T-cell (primary cell): ENCODE measurements at regions of chr9 and their contacts with region 1.

Region 1: DNA sequence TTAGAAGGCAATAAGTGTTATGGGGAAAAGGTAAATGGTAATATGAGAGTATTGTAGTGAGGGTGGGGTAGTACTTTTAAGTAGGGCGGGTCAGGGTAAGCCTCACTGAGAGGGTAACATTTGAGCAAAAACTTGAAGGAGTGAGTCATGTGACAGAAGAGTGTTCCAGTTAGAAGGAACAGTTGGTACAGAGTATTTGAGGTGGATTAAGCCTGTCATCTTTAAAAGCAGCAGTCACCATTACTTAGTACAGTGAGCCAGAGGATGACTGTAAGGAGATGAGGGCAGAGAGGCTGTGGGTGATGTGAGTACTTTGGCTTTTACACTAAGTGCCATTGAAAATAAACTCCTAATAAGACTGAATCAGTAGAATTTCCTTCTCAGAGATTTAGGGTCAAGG is 54.8 kb downstream of the UBAP1 start:
- DNase-seq: no peak
- ATAC-seq: no peak
- H3K4me3 ChIP-seq: no peak overlapping the region
- H3K4me3 Mint-ChIP-seq: no peak overlapping the region
- H3K27ac ChIP-seq: no peak overlapping the region
- H3K27ac Mint-ChIP-seq: peak overlapping the region in 1 of 2 donors; percentile 65
- H3K4me1 ChIP-seq: peaks cover 0 to under 1% of the 10 kb centered on the region in 2 experiments
- H3K4me1 Mint-ChIP-seq: peaks cover 13 to 26% (median 22%) of the 10 kb centered on the region in 3 donors
- H3K27me3 ChIP-seq: no peaks in the 10 kb centered on the region
- H3K27me3 Mint-ChIP-seq: no peaks in the 10 kb centered on the region

Region 2: DNA sequence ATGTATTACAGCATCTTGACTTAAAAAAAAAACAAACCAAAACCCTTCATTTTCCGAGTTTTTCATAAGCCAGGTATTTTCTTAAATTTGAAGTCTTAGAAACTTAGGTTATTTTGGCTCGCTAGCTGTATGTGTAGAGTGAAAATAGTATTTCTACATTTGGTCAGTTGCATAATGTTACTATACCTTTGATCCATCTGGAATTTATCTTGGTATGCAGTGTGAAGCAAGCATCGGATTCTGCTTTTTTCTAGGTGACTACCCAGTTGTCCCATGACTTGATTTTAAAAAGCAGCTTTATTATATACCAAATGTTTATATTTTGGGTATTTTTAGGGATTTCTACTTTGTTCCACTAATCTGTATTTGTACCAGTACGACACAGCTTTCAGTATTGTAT is 27.1 kb before region 1 on chr9:
- CTCF ChIA-PET with region 1: no interaction called
- POLR2A ChIA-PET with region 1: interaction called in 1 of 2 experiments, 13 read pairs
- DNase-seq: no peak
- ATAC-seq: no peak
- H3K4me3 ChIP-seq: no peak overlapping the region
- H3K4me3 Mint-ChIP-seq: no peak overlapping the region
- H3K27ac ChIP-seq: no peak overlapping the region
- H3K27ac Mint-ChIP-seq: no peak overlapping the region
- H3K4me1 ChIP-seq: peaks cover 1 to 8% of the 10 kb centered on the region in 2 experiments
- H3K4me1 Mint-ChIP-seq: peaks cover 55 to 64% (median 56%) of the 10 kb centered on the region in 3 donors
- H3K27me3 ChIP-seq: no peaks in the 10 kb centered on the region
- H3K27me3 Mint-ChIP-seq: no peaks in the 10 kb centered on the region

Region 3: GRCh38 chr9:34216325-34216724 is 17.3 kb before region 1 on chr9:
- CTCF ChIA-PET with region 1: interaction called in 1 of 2 experiments, 6 read pairs
- POLR2A ChIA-PET with region 1: interaction called in 1 of 2 experiments, 10 read pairs
- DNase-seq: no peak
- ATAC-seq: no peak
- H3K4me3 ChIP-seq: no peak overlapping the region
- H3K4me3 Mint-ChIP-seq: no peak overlapping the region
- H3K27ac ChIP-seq: no peak overlapping the region
- H3K27ac Mint-ChIP-seq: no peak overlapping the region
- H3K4me1 ChIP-seq: peaks cover 0 to 2% of the 10 kb centered on the region in 2 experiments
- H3K4me1 Mint-ChIP-seq: peaks cover 18 to 45% (median 35%) of the 10 kb centered on the region in 3 donors
- H3K27me3 ChIP-seq: no peaks in the 10 kb centered on the region
- H3K27me3 Mint-ChIP-seq: no peaks in the 10 kb centered on the region

Region 4: DNA sequence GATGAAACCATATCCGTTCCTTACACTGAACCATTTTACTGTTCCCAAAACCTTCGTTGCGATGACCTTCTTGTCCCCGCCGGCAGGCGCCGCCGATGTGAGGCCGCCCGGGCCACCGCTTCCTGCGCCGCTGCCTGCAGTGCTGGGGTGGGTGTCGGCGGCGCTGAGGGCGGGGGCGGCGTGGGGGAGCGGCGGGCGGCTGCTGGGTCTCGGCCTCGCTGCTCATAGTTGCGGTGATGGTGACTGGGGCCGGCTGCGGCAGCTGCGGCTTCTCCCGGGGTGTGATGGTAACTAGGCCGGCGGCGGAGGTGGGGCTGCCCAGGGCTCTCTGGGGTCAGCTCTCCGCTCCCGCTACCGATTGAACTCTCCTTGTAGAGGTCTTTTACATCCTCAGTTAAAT is 1738.4 kb after region 1 on chr9:
- CTCF ChIA-PET with region 1: interaction called in 1 of 2 experiments, 11 read pairs
- POLR2A ChIA-PET with region 1: no interaction called
- DNase-seq: peak in 26 of 35 experiments; percentile 2 to 47 (median 20)
- ATAC-seq: peak; percentile 77 to 81 (median 80)
- H3K4me3 ChIP-seq: no peak overlapping the region
- H3K4me3 Mint-ChIP-seq: peak overlapping the region; percentile 29 to 67 (median 49)
- H3K27ac ChIP-seq: no peak overlapping the region
- H3K27ac Mint-ChIP-seq: no peak overlapping the region
- H3K4me1 ChIP-seq: peaks cover 2 to 5% of the 10 kb centered on the region in 2 experiments
- H3K4me1 Mint-ChIP-seq: peaks cover 7 to 14% (median 12%) of the 10 kb centered on the region in 3 donors
- H3K27me3 ChIP-seq: peaks cover 0 to 26% of the 10 kb centered on the region in 2 experiments
- H3K27me3 Mint-ChIP-seq: peaks cover 51 to 70% of the 10 kb centered on the region in 2 donors